ENCODE measurements at regions of chr10 and their contacts with region 1.

Region 1: DNA sequence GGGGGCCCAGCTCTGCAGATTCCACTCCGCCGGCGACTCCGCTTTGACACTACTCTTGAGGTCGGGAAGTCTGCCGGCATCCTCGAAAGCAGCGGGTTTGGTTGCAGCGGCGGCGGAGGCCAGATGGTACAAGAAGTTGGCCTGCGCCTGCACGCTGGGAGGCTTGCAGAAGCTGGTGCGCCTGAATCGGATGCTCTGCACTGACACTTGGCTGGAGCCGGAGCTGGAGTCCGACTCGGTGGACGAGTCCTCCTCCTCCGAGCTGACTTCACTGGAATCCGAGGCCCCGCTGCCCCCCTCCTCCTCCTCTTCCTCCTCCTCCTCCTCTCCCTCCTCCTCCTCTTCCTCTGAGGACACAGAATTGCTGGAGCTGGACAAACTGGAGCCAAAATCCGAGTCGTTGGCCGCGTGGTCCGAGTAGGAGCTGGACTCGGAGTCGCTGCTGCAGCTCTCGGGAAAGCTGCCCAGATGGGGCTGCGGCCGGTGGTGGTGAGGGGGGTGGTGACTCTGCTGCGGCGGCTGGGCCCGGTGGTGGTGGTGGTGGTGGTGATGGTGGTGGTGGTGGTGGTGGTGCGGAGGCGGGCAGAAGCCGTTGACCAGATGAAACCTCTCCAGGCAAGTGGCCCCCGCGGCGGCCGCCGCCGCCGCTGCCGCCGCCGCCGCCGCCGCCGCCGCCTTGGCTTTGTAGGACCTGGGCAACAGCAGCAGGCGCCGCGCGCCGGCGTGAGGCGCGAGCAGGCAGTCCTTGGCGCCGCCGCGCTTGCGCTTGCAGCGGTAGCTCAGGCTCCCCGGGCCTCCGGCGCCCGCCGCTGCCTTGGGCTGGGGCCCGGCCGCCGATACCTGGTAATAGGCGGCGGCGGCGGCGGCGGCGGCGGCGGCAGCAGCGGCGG is 9.0 kb downstream of the SKIDA1 start:
- DNase-seq: peak; percentile 86
- H3K4me3 Mint-ChIP-seq: peak overlapping the region; percentile 87
- H3K27ac Mint-ChIP-seq: no peak overlapping the region
- H3K4me1 Mint-ChIP-seq: peaks cover 40% of the 10 kb centered on the region
- H3K27me3 Mint-ChIP-seq: peaks cover 78% of the 10 kb centered on the region

Region 2: DNA sequence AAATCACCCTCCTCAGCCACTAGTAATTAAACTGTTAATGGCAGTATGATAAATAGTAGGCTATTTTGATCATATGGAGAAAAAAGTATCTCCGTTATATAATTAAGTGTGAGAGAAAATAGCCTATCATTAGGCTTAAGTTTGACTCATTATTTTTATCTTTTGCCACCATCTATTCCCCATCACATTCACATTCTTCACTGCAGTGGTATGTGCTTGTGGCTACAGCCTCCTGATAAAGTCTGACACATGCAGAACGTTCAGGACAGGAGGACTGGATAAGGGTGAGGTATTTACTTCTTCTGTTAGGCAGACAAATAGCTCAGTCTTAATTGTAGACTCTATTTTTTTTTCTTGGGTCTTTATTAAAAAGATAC is 625.2 kb before region 1 on chr10:
- intact Hi-C with region 1: no loop called
- DNase-seq: no peak
- H3K4me3 Mint-ChIP-seq: no peak overlapping the region
- H3K27ac Mint-ChIP-seq: no peak overlapping the region
- H3K4me1 Mint-ChIP-seq: no peaks in the 10 kb centered on the region
- H3K27me3 Mint-ChIP-seq: peaks cover 1% of the 10 kb centered on the region

Region 3: GRCh38 chr10:21533467-21534279 is 17.2 kb after region 1 on chr10 and contains the start of gene MLLT10:
- intact Hi-C with region 1: loop called (anchors 1 kb)
- DNase-seq: peak; percentile 97
- H3K4me3 Mint-ChIP-seq: peak within 1 kb of the TSS; percentile 88
- H3K27ac Mint-ChIP-seq: peak within 1 kb of the TSS; percentile 93
- H3K4me1 Mint-ChIP-seq: peaks cover 23% of the 10 kb centered on the region
- H3K27me3 Mint-ChIP-seq: peaks cover 14% of the 10 kb centered on the region
- total RNA-seq, gene MLLT10: 40.2 and 42.0 TPM in 2 replicates

Region 4: DNA sequence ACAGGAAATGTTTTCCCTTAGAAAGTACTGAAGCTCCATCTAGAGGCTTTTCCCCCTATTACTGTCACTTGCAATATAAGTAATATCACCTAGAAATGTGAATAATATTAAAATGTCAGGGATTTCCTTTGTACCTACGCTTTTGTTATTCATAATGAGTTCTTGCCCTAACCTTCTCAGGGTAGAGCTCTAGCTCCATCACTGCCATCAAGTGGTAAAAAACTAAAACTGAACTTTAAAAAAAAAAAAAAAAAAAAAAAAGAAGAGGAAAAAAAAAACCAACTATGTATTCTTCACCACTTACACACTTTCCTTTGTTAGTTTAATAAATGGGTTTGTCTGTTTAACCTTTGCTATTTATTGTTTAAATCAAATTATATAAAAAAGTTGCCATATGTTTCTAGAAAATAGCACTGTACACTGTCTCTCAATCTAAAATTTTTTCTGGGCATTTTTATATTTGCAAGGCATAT is 437.1 kb after region 1 on chr10:
- intact Hi-C with region 1: loop called (anchors 5 kb)
- DNase-seq: no peak
- H3K4me3 Mint-ChIP-seq: no peak overlapping the region
- H3K27ac Mint-ChIP-seq: no peak overlapping the region
- H3K4me1 Mint-ChIP-seq: peaks cover 4% of the 10 kb centered on the region
- H3K27me3 Mint-ChIP-seq: no peaks in the 10 kb centered on the region

Region 5: GRCh38 chr10:22251751-22252223 is 735.3 kb after region 1 on chr10:
- intact Hi-C with region 1: loop called (anchors 5 kb)
- DNase-seq: peak; percentile 91
- H3K4me3 Mint-ChIP-seq: peak overlapping the region; percentile 91
- H3K27ac Mint-ChIP-seq: peak overlapping the region; percentile 98
- H3K4me1 Mint-ChIP-seq: peaks cover 31% of the 10 kb centered on the region
- H3K27me3 Mint-ChIP-seq: peaks cover 14% of the 10 kb centered on the region

Region 6: DNA sequence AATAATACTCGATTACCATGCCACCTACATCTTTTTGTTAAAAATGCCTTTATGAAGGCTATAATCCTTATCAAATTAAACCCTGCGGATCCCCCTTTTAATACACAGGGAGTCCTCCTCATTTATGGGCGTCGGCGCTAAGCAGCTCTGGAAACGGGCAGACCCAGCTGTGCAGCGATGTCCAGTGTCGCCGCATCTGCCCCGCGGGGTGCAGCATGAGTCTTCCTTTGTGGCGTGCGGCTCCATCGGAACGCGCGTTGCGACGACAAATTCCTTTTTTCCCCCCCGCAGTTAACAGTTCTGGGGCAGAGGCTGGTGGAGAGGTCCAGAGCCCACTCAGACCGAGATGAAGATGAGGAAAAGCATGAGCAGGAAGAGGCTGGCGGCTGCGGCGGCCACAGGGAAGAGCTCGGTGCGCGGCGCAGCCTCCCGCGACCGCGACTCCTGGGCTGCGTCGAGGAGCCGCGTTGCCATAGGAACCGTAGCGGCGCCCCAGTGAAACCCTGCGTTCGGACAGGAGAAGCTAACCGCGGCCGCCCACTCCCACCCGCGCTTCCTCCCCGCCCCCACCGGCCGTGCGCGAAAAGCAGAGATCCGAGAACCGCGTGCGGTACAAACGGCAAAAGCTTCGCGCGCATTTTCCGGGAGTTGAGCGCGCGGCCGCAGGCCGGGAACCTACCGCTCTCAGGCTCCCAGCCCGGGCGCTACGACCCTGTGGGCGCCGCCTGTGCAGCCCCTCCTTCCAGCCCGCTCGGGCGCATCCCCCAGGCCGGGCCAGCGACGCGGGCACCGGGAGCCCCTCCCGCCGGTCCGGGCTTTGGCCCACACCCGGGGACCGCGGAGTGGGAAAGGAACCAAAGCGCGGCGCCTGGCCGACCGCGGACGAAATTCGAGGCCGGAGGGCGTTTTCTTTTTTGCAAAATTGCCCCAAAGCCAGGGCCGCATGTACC is 959.4 kb after region 1 on chr10:
- intact Hi-C with region 1: loop called (anchors 10 kb)
- DNase-seq: peak; percentile 79
- H3K4me3 Mint-ChIP-seq: peak overlapping the region; percentile 86
- H3K27ac Mint-ChIP-seq: peak overlapping the region; percentile 86
- H3K4me1 Mint-ChIP-seq: peaks cover 11% of the 10 kb centered on the region
- H3K27me3 Mint-ChIP-seq: peaks cover 57% of the 10 kb centered on the region

Region 7: GRCh38 chr10:23192737-23193434 is 1676.4 kb after region 1 on chr10:
- intact Hi-C with region 1: loop called (anchors 5 kb)
- DNase-seq: peak; percentile 50
- H3K4me3 Mint-ChIP-seq: no peak overlapping the region
- H3K27ac Mint-ChIP-seq: no peak overlapping the region
- H3K4me1 Mint-ChIP-seq: peaks cover 2% of the 10 kb centered on the region
- H3K27me3 Mint-ChIP-seq: peaks cover 71% of the 10 kb centered on the region

Measured in activated CD4-positive, alpha-beta T cell treated with anti-CD3 and anti-CD28 coated beads, Interleukin-2, amount 10 ng/mL, durations not matched to agents 24 days and 14 days (primary cell).